Heart left ventricle (tissue), 16 donors: ENCODE measurements at regions of chr1 and their contacts with region 1.

Region 1: GRCh38 chr1:235206533-235207208 is 45.6 kb upstream of the RBM34 start:
- DNase-seq: no peak
- ATAC-seq: no peak
- H3K4me3 ChIP-seq: no peak overlapping the region
- H3K27ac ChIP-seq: no peak overlapping the region
- H3K4me1 ChIP-seq: no peaks in the 10 kb centered on the region
- H3K27me3 ChIP-seq: no peaks in the 10 kb centered on the region
- CTCF ChIP-seq: no peak
- POLR2A ChIP-seq: no peak

Region 2: DNA sequence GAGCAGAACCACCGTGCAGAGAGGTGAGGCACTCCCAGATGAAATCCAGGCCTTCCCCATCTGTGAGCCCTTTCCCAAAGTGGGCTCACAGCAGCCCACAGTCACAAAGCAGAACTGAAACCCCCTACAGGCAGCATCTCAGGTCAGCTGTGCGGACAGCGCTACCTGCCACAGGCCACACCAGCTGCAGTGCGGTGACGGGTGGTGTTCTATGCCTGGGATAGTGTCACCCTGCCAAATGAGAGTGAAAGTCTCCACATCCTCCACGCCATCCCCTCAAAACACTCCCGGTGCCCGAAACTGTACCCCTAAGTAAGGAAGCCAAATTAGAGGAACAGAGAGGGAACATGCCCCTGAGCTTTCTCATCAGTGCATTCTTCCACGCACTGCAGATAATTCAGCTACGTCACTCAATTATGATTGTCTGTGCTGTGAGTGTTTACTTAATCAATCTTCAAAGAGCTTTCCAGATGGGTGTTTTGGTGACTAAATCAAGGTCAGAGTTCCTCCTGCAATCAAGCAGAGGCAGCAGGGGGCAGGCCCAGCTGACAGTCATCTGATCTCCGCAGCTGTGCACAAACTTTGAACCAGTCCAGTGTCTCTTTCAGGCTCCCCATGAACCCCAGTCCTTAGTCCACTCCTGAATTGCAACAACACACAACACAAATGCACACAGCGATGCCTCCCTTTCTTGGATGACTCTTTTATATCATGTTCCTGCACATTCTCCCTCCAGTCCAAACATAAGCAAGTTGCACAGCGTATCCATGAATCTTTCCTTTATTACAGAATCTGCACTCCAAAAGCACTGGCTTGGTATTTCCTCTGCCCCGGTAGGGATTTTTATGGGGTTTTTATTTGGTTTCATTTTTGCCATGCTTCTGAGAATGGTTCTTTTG is 228.0 kb before region 1 on chr1:
- intact Hi-C with region 1: no loop called
- DNase-seq: peak in 4 of 5 donors; percentile 48 to 71 (median 60)
- ATAC-seq: peak; percentile 7 to 51 (median 22)
- H3K4me3 ChIP-seq: peak overlapping the region in 2 of 12 donors; percentile 15 to 55
- H3K27ac ChIP-seq: peak overlapping the region; percentile 71 to 98 (median 88)
- H3K4me1 ChIP-seq: peaks cover 15 to 91% (median 45%) of the 10 kb centered on the region in 12 donors
- H3K27me3 ChIP-seq: no peaks in the 10 kb centered on the region
- CTCF ChIP-seq: peak in 5 of 12 donors; percentile 6 to 39 (median 19)
- POLR2A ChIP-seq: no peak

Region 3: DNA sequence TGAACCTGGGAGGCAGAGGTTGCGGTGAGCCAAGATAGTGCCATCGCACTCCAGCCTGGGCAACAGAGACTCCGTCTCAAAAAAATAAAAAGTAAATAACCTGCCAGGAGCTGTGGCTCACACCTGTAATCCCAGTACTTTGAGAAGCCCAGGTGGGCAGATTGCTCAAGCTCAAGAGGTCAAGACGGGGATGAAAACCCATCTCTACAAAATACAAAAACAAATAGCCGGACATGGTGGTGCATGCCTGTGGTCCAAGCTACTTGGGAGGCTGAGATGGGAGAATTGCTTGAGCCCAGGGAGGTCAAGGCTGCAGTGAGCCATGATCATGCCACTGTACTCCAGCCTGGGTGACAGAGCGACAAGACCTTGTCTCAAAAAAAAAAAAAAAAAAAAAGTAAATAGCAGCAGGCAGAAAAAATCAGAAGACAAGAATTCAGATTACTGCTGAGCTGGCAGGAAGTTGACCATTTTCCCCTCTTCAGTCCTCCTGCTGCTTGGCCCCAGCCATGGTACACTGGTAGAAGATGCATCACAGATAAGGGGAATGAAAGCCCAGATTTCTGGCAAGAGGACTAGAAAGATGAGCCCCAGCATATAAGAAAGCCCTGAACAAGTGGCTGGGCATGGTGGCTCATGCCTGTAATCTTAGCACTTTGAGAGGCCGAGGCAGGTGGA is 175.6 kb before region 1 on chr1:
- intact Hi-C with region 1: no loop called
- DNase-seq: no peak
- ATAC-seq: no peak
- H3K4me3 ChIP-seq: no peak overlapping the region
- H3K27ac ChIP-seq: no peak overlapping the region
- H3K4me1 ChIP-seq: no peaks in the 10 kb centered on the region
- H3K27me3 ChIP-seq: no peaks in the 10 kb centered on the region
- CTCF ChIP-seq: no peak
- POLR2A ChIP-seq: no peak

Region 4: GRCh38 chr1:235741294-235741693 is 534.6 kb after region 1 on chr1:
- intact Hi-C with region 1: loop called in 1 of 10 experiments (anchors 10 kb)
- DNase-seq: no peak
- ATAC-seq: peak in 1 of 4 donors; percentile 45
- H3K4me3 ChIP-seq: no peak overlapping the region
- H3K27ac ChIP-seq: peak overlapping the region in 1 of 12 donors; percentile 4
- H3K4me1 ChIP-seq: peaks cover 0 to 7% (median 0%) of the 10 kb centered on the region in 12 donors
- H3K27me3 ChIP-seq: no peaks in the 10 kb centered on the region
- CTCF ChIP-seq: no peak
- POLR2A ChIP-seq: no peak